ENCODE measurements at regions of chr9 and their contacts with region 1.

Region 1: GRCh38 chr9:4366591-4367330 is 66.9 kb upstream of the GLIS3 start:
- DNase-seq: no peak
- ATAC-seq: no peak

Region 2: DNA sequence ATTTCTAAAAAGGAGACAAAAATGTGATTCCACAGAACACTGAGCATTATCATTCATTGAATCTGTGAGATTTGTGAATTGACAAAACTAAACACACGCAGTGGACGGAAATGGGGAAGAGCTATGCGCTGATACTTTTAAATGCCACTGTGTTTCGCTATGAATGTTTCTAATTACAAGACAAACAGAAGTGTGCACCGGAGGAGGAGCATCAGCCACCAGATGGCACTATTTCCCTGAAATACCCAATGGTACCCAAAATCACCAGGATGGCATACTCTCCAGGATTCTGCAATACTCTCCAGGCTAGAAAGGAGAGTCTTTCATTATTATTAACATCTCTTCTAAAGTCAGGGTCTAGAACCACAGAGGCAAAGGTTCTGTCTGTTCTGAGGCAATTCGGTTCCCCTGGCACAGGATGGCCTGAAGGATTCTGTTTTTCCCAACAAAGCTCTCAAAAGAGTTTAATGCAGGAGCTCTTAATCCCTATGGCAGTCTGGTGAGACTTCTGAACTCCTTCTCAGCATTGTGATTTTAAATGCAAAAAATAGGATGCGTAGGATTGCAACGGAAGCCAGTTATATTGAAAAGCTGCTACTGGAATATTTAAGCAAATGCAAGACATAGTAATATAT is 1509.1 kb before region 1 on chr9:
- intact Hi-C with region 1: loop called (anchors 5 kb)
- DNase-seq: no peak
- ATAC-seq: peak; percentile 57

Region 3: GRCh38 chr9:4315582-4316215 is 51.1 kb before region 1 on chr9:
- intact Hi-C with region 1: loop called (anchors 2 kb)
- DNase-seq: peak; percentile 81
- ATAC-seq: peak; percentile 91

Region 4: GRCh38 chr9:4422495-4422894 is 55.7 kb after region 1 on chr9:
- intact Hi-C with region 1: no loop called
- DNase-seq: no peak
- ATAC-seq: no peak

Measured in Right ventricle myocardium inferior (tissue), 1 donor.